CD4-positive, alpha-beta T cell (primary cell): ENCODE measurements at regions of chr17 and their contacts with region 1.

Region 1: DNA sequence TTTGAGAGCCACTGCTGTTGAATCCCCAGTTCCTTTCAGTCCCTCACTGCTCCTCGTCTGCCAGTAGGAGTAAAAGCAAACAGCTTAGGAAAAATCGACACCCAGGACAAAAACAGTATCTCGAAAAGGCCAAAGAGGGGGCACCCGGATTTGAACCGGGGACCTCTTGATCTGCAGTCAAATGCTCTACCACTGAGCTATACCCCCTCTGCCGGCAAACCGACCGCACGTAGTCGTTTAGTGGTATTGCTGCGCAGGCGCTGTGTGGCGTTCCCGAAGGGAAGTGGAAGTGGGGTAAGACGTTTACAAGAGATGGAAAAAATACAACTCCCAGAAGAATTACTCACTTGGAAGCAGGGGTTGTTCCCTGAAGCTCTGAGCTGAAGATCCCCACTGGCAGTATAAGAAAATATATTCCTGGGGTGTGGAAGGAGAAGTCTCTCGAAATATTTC is 2.2 kb upstream of the PLXDC1 start:
- DNase-seq: peak; percentile 89 to 98 (median 94)
- ATAC-seq: peak; percentile 60
- H3K4me3 ChIP-seq: peak overlapping the region; percentile 94
- H3K4me3 Mint-ChIP-seq: peak overlapping the region; percentile 99
- H3K27ac ChIP-seq: peak overlapping the region; percentile 47 to 69
- H3K27ac Mint-ChIP-seq: peak overlapping the region; percentile 97
- H3K4me1 ChIP-seq: peaks cover 55% of the 10 kb centered on the region
- H3K4me1 Mint-ChIP-seq: peaks cover 47% of the 10 kb centered on the region
- H3K27me3 ChIP-seq: peaks cover 0 to 5% of the 10 kb centered on the region in 2 experiments
- H3K27me3 Mint-ChIP-seq: peaks cover 19% of the 10 kb centered on the region
- CTCF ChIP-seq: no peak

Region 2: GRCh38 chr17:38674749-38675615 is 478.6 kb before region 1 on chr17 and contains the start of gene EPOP:
- CTCF ChIA-PET with region 1: no interaction called
- POLR2A ChIA-PET with region 1: interaction called, 3 read pairs
- intact Hi-C with region 1: loop called in 1 of 2 experiments (anchors 5 kb)
- DNase-seq: peak; percentile 47 to 92 (median 80)
- ATAC-seq: peak; percentile 80
- H3K4me3 ChIP-seq: peak within 1 kb of the TSS; percentile 38
- H3K4me3 Mint-ChIP-seq: peak within 1 kb of the TSS; percentile 75
- H3K27ac ChIP-seq: no peak within 1 kb of the TSS
- H3K27ac Mint-ChIP-seq: no peak within 1 kb of the TSS
- H3K4me1 ChIP-seq: peaks cover 37% of the 10 kb centered on the region
- H3K4me1 Mint-ChIP-seq: peaks cover 24% of the 10 kb centered on the region
- H3K27me3 ChIP-seq: peaks cover 26 to 34% of the 10 kb centered on the region in 2 experiments
- H3K27me3 Mint-ChIP-seq: peaks cover 54% of the 10 kb centered on the region
- CTCF ChIP-seq: no peak
- total RNA-seq, gene EPOP: 0.16 to 0.34 TPM

Region 3: GRCh38 chr17:38853292-38854219 is 300.1 kb before region 1 on chr17 and contains the start of gene RPL23:
- CTCF ChIA-PET with region 1: interaction called, 10 read pairs
- POLR2A ChIA-PET with region 1: interaction called, 16 read pairs
- intact Hi-C with region 1: loop called in 1 of 2 experiments (anchors 5 kb)
- DNase-seq: peak; percentile 77 to 97 (median 86)
- ATAC-seq: peak; percentile 80
- H3K4me3 ChIP-seq: peak within 1 kb of the TSS; percentile 67
- H3K4me3 Mint-ChIP-seq: peak within 1 kb of the TSS; percentile 90
- H3K27ac ChIP-seq: peak within 1 kb of the TSS; percentile 86 to 92
- H3K27ac Mint-ChIP-seq: peak within 1 kb of the TSS; percentile 96
- H3K4me1 ChIP-seq: peaks cover 29% of the 10 kb centered on the region
- H3K4me1 Mint-ChIP-seq: peaks cover 39% of the 10 kb centered on the region
- H3K27me3 ChIP-seq: no peaks in the 10 kb centered on the region
- H3K27me3 Mint-ChIP-seq: no peaks in the 10 kb centered on the region
- CTCF ChIP-seq: no peak
- total RNA-seq, gene RPL23: 2,293 to 2,296 TPM

Region 4: DNA sequence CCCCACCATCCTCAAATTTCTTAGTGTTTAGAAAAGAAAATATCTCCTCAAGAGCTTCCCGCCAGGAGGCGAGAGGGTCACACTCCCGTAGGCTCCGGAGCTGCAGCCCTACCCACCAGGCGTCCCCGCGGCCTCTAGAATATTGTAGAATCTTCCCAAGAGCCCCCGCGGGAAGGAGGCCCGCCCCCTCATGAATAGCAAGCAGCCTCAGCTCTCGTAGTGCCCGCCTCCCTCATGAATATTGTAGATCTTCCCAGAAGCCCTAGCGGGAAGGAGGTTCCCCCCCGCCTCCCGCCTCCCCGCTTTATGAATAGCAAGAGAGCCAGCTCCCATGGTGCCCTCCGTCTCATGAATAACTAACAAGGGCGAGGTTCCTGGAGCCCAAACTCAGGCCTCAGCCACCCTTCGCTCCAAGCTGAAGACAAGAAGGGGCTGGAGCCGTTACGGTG is 186.3 kb before region 1 on chr17 and contains the start of gene FBXO47:
- CTCF ChIA-PET with region 1: interaction called, 5 read pairs
- POLR2A ChIA-PET with region 1: interaction called, 12 read pairs
- intact Hi-C with region 1: no loop called
- DNase-seq: peak; percentile 66 to 92 (median 76)
- ATAC-seq: peak; percentile 98
- H3K4me3 ChIP-seq: peak within 1 kb of the TSS; percentile 34
- H3K4me3 Mint-ChIP-seq: peak within 1 kb of the TSS; percentile 83
- H3K27ac ChIP-seq: peak within 1 kb of the TSS; percentile 1 to 45
- H3K27ac Mint-ChIP-seq: peak within 1 kb of the TSS; percentile 61
- H3K4me1 ChIP-seq: peaks cover 16% of the 10 kb centered on the region
- H3K4me1 Mint-ChIP-seq: peaks cover 14% of the 10 kb centered on the region
- H3K27me3 ChIP-seq: no peaks in the 10 kb centered on the region
- H3K27me3 Mint-ChIP-seq: no peaks in the 10 kb centered on the region
- CTCF ChIP-seq: no peak
- total RNA-seq, gene FBXO47: not detected

Region 5: DNA sequence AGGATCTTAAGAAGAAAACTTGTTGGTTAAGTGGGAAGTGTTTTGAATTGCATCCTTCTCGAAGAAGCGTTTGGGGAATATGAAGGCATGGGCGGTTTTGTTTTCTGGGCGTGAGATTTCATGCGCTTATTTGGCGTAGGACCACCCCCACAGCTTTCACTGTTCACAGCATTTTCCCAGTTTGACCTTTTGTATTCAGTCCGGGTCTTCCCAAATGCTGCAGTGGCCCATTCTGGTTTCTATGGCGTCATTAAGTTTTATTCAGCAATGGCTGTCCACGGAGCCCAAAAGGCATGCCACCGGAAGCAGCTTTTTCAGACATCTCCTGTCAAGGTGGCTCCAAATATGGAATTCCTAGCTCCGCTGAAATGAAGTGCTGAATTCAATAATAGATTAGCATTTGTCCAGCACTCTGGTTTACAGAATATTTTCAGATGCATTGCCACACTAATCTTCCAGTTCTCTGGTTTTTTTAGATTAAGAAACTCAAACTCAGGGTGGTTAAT is 95.9 kb before region 1 on chr17:
- CTCF ChIA-PET with region 1: interaction called, 7 read pairs
- POLR2A ChIA-PET with region 1: interaction called, 15 read pairs
- intact Hi-C with region 1: no loop called
- DNase-seq: no peak
- ATAC-seq: no peak
- H3K4me3 ChIP-seq: no peak overlapping the region
- H3K4me3 Mint-ChIP-seq: peak overlapping the region; percentile 60
- H3K27ac ChIP-seq: no peak overlapping the region
- H3K27ac Mint-ChIP-seq: peak overlapping the region; percentile 81
- H3K4me1 ChIP-seq: peaks cover 12% of the 10 kb centered on the region
- H3K4me1 Mint-ChIP-seq: peaks cover 14% of the 10 kb centered on the region
- H3K27me3 ChIP-seq: no peaks in the 10 kb centered on the region
- H3K27me3 Mint-ChIP-seq: no peaks in the 10 kb centered on the region
- CTCF ChIP-seq: no peak

Region 6: GRCh38 chr17:39099663-39100286 is 53.9 kb before region 1 on chr17:
- CTCF ChIA-PET with region 1: interaction called, 3 read pairs
- POLR2A ChIA-PET with region 1: interaction called, 71 read pairs
- intact Hi-C with region 1: loop called in 1 of 2 experiments (anchors 2 kb)
- DNase-seq: no peak
- ATAC-seq: no peak
- H3K4me3 ChIP-seq: no peak overlapping the region
- H3K4me3 Mint-ChIP-seq: no peak overlapping the region
- H3K27ac ChIP-seq: no peak overlapping the region
- H3K27ac Mint-ChIP-seq: peak overlapping the region; percentile 83
- H3K4me1 ChIP-seq: peaks cover 65% of the 10 kb centered on the region
- H3K4me1 Mint-ChIP-seq: peaks cover 77% of the 10 kb centered on the region
- H3K27me3 ChIP-seq: no peaks in the 10 kb centered on the region
- H3K27me3 Mint-ChIP-seq: no peaks in the 10 kb centered on the region
- CTCF ChIP-seq: no peak

Region 7: GRCh38 chr17:39199820-39200069 is 46.1 kb after region 1 on chr17:
- CTCF ChIA-PET with region 1: no interaction called
- POLR2A ChIA-PET with region 1: interaction called, 42 read pairs
- intact Hi-C with region 1: no loop called
- DNase-seq: peak; percentile 69 to 95 (median 83)
- ATAC-seq: peak; percentile 65
- H3K4me3 ChIP-seq: peak overlapping the region; percentile 90
- H3K4me3 Mint-ChIP-seq: peak overlapping the region; percentile 90
- H3K27ac ChIP-seq: peak overlapping the region; percentile 96 to 99
- H3K27ac Mint-ChIP-seq: peak overlapping the region; percentile 94
- H3K4me1 ChIP-seq: peaks cover 78% of the 10 kb centered on the region
- H3K4me1 Mint-ChIP-seq: peaks cover 65% of the 10 kb centered on the region
- H3K27me3 ChIP-seq: no peaks in the 10 kb centered on the region
- H3K27me3 Mint-ChIP-seq: no peaks in the 10 kb centered on the region
- CTCF ChIP-seq: no peak